K562 (cell line): ENCODE measurements at regions of chr3 and their contacts with region 1.

Region 1: DNA sequence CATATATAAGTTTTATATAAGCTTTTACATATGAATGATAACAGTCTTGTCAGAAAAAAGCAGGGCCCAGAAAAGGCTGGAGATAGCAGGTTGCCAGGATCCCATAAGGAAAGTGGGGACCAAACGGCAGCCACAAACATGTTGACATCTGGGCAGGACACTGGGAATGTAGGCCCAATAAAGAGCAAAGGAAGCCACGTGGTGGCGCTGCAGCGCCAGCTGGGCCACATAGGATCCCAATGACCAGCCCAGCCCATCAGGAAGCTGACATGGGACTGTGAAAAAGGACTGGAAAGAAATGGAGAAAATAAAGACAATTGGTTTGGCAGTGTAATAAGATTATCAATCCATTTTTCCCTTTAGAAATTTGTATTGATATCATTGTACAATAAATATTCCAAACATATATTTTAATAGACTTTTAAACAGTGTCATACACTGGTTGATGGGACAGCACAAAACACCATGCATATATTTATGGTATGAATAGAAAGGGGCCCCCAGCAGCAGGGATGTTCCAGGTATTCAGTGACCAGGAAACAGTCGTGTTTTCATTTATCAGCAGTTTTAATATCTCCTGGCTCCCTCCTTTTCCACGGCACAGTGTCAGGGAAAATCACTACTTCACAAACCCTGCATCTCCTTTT is 89.0 kb upstream of the STRIT1 start:
- DNase-seq: peak; percentile 64 to 85 (median 70)
- ATAC-seq: peak; percentile 99
- H3K4me3 ChIP-seq: no peak overlapping the region
- H3K27ac ChIP-seq: no peak overlapping the region
- H3K4me1 ChIP-seq: no peaks in the 10 kb centered on the region
- H3K27me3 ChIP-seq: peaks cover under 1 to 7% of the 10 kb centered on the region in 2 experiments; a peak in 3 of 5 replicates
- CTCF ChIP-seq: peak; percentile 79 to 89 (median 83)
- EP300 ChIP-seq: no peak
- POLR2A ChIP-seq: no peak
- RAD21 ChIP-seq: peak; percentile 94 to 95

Region 2: GRCh38 chr3:155362808-155363689 is 19.5 kb before region 1 on chr3:
- CTCF ChIA-PET with region 1: no interaction called
- POLR2A ChIA-PET with region 1: no interaction called
- in situ Hi-C with region 1: no loop called
- intact Hi-C with region 1: no loop called
- DNase-seq: no peak
- ATAC-seq: peak; percentile 82
- H3K4me3 ChIP-seq: no peak overlapping the region
- H3K27ac ChIP-seq: no peak overlapping the region
- H3K4me1 ChIP-seq: 0 out of 5 replicates have a peak, but pooled peaks cover 0 to 4% of the 10 kb centered on the region in 2 experiments
- H3K27me3 ChIP-seq: no peaks in the 10 kb centered on the region
- CTCF ChIP-seq: no peak
- EP300 ChIP-seq: no peak
- POLR2A ChIP-seq: no peak
- RAD21 ChIP-seq: no peak

Region 3: DNA sequence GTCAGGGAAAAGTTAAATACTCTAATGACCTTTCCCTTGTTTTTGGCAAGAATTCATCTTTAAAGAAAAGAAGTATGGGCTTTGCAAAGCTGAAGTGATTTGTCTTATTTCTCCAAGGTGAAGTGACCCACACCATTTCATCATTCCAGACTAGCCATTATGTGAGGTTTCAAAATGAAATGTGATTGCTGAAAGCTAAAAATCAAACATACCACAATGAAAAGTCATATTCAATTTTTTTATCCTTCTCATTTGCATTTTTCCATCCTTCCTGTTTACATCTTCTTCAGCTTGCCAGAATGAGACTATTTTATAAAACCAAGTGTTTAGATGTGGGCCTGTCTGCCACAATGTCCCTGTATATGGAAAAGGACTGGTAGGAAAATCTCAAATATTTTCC is 53.3 kb after region 1 on chr3:
- CTCF ChIA-PET with region 1: no interaction called
- POLR2A ChIA-PET with region 1: no interaction called
- in situ Hi-C with region 1: no loop called
- intact Hi-C with region 1: no loop called
- DNase-seq: no peak
- ATAC-seq: no peak
- H3K4me3 ChIP-seq: no peak overlapping the region
- H3K27ac ChIP-seq: no peak overlapping the region
- H3K4me1 ChIP-seq: no peaks in the 10 kb centered on the region
- H3K27me3 ChIP-seq: no peaks in the 10 kb centered on the region; a peak in 1 of 5 replicates
- CTCF ChIP-seq: no peak
- EP300 ChIP-seq: no peak
- POLR2A ChIP-seq: no peak
- RAD21 ChIP-seq: no peak

Region 4: DNA sequence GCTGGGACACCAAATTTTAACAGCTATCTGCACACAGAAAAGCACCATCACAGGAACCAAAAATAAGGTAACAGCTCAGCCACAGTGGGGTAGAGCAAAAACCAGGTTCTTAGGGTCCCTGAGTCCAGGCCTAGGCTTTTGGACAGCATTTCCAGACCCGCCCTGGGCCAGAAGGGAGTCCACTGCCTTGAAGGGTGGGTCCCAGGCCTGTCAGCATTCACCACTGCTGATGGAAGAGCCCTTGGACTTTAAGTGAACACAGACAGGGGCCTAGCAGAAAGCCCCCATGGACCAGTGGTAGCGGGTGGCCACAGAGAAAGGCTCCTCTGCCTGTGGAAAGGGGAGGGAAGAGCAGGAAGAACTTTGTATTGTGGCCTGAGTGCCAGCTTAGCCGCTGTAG is 306.0 kb after region 1 on chr3:
- CTCF ChIA-PET with region 1: no interaction called
- POLR2A ChIA-PET with region 1: no interaction called
- in situ Hi-C with region 1: loop called (anchors 5 kb)
- intact Hi-C with region 1: no loop called
- DNase-seq: no peak
- ATAC-seq: no peak
- H3K4me3 ChIP-seq: no peak overlapping the region
- H3K27ac ChIP-seq: no peak overlapping the region
- H3K4me1 ChIP-seq: no peaks in the 10 kb centered on the region
- H3K27me3 ChIP-seq: peaks cover 7 to 8% of the 10 kb centered on the region in 2 experiments; a peak in 4 of 5 replicates
- CTCF ChIP-seq: no peak
- EP300 ChIP-seq: no peak
- POLR2A ChIP-seq: no peak
- RAD21 ChIP-seq: no peak